ENCODE measurements at regions of chr13 and their contacts with region 1.

Region 1: GRCh38 chr13:47774671-47774994 is 226.4 kb downstream of the SUCLA2 start:
- DNase-seq: no peak
- H3K4me3 ChIP-seq: no peak overlapping the region
- H3K27ac ChIP-seq: no peak overlapping the region
- H3K4me1 ChIP-seq: peaks cover 0 to 6% (median 0%) of the 10 kb centered on the region in 6 donors
- H3K27me3 ChIP-seq: peaks cover 0 to 5% (median 0%) of the 10 kb centered on the region in 7 donors
- CTCF ChIP-seq: no peak
- POLR2A ChIP-seq: no peak

Region 2: GRCh38 chr13:46831588-46832194 is 942.9 kb before region 1 on chr13:
- intact Hi-C with region 1: loop called (anchors 5 kb)
- DNase-seq: no peak
- H3K4me3 ChIP-seq: no peak overlapping the region
- H3K27ac ChIP-seq: no peak overlapping the region
- H3K4me1 ChIP-seq: no peaks in the 10 kb centered on the region
- H3K27me3 ChIP-seq: no peaks in the 10 kb centered on the region
- CTCF ChIP-seq: peak; percentile 25 to 81 (median 65)
- POLR2A ChIP-seq: no peak

Region 3: GRCh38 chr13:46964789-46965527 is 809.7 kb before region 1 on chr13:
- intact Hi-C with region 1: loop called (anchors 5 kb)
- DNase-seq: no peak
- H3K4me3 ChIP-seq: no peak overlapping the region
- H3K27ac ChIP-seq: no peak overlapping the region
- H3K4me1 ChIP-seq: peaks cover 0 to 3% (median 0%) of the 10 kb centered on the region in 6 donors
- H3K27me3 ChIP-seq: no peaks in the 10 kb centered on the region
- CTCF ChIP-seq: no peak
- POLR2A ChIP-seq: no peak

Region 4: DNA sequence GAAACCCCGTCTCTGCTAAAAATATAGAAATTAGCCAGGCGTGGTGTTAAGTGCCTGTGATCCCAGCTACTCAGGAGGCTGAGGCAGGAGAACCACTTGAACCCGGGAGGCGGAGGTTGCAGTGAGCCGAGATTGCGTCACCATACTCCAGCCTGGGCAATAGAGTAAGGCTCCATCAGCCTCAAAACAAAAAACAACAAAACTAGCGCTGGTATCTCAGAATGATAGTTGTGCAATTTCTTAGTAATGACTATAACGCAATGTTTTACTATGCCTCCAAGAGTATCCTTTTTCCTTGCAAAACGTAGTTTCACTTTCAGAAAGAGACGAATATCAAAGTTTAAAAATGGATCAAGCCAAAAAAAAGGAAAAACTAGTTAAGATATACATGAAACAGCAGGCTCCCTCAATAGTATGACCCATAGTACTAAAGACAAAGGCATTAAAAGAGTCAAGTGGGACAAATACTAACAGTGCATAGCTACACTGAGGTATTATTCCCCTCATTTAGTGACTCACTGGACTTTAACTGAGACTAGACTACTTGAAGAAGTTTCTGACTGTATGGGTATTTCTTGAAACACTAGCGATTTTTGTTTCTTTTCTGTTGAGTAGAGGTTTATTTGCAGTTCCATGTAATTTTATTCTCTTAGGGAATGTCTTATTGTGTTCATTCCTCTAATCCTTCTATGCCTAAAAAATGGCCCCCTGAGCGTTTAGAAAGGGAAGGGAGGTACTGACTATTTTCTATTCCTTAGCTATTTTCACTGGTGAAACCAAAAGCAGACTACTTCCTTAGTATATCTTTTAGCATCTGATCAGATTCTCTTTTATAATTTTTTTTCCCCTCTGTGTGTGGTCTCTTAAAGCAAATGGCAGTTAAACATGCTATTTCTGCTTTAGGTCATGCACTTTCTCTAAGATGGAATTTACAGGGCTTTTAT is 448.0 kb after region 1 on chr13:
- intact Hi-C with region 1: no loop called
- DNase-seq: no peak
- H3K4me3 ChIP-seq: peak overlapping the region; percentile 4 to 56 (median 22)
- H3K27ac ChIP-seq: peak overlapping the region; percentile 80 to 90 (median 84)
- H3K4me1 ChIP-seq: peaks cover 23 to 58% (median 41%) of the 10 kb centered on the region in 6 donors
- H3K27me3 ChIP-seq: no peaks in the 10 kb centered on the region
- CTCF ChIP-seq: no peak
- POLR2A ChIP-seq: no peak

Measured in spleen (tissue), 13 donors.